AG04450 (cell line): ENCODE measurements at regions of chr4 and their contacts with region 1.

Region 1: DNA sequence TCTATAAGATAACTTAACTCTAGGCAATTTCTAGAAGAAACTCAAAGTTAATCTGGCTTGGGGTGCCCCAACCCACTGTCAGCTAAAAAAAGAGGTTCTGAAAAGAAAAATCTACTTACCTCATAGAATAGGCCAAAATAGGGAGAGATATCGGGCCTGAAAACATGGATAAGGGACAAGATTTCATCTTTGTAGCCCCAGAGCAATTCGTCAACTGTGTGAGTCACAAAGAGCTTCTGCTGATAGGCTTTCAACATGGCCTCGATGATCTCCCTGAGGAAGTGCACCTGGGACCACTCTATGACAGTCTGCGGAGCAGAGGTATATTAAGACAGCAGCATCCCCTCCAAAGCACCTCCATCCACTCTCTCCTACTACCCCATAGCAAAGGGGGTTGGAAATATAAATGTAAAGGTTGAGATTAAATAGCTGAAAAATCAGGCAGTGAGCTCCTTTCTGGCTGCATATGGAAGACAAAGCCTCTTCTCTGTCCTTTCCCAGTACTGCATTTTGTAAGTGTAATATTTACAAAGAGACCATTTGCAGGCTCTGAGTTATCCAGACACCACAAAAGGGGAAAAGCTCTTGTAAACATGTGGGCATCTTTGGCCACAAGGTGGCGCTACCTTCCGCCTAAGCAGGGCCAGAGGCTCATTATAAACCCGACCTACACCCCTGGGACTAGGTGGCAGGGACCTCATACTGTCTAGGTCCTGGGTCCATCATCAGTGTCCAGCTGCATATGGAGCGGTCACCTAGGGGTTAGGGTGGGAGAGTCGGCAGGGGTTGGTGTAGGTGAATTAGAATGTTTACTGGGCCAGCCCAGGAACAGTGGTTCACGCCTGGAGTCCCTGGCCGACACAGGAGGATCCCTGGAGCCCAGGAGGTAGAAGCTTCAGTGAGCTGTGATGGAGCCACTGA is 31.5 kb upstream of the NUP54 start:
- DNase-seq: peak; percentile 66
- H3K4me3 ChIP-seq: no peak overlapping the region
- H3K27ac ChIP-seq: no peak overlapping the region
- H3K27me3 ChIP-seq: no peaks in the 10 kb centered on the region
- CTCF ChIP-seq: peak; percentile 96

Region 2: DNA sequence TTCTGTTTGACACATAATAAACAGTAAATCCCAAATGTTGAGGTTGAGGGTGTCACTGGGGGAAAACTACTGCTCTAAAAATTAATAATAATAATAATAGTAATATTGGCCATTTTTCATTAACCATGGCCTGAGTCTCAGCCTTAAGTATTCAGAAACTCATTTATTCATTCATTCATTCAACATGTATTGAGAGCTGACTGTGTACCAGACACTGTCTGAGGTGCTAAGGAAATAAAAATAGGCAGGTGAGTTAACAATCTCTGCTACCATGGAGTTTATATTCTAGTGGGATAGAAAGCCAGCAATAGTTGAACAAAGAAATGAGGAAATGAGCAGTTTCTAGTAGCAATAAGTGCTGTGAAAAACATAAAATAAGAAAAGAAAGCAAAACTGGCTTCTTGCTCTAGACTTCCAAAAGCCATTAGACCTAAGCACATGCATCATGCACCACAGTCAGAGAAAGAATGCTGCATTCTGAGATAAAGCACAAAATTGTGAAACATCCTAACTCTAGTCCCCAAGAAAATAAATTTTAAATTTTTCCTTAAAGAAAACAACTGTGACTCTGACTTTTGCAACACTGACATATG is 944.2 kb before region 1 on chr4:
- CTCF ChIA-PET with region 1: no interaction called
- POLR2A ChIA-PET with region 1: no interaction called
- DNase-seq: no peak
- H3K4me3 ChIP-seq: no peak overlapping the region
- H3K27ac ChIP-seq: no peak overlapping the region
- H3K27me3 ChIP-seq: no peaks in the 10 kb centered on the region
- CTCF ChIP-seq: no peak

Region 3: GRCh38 chr4:75985116-75985515 is 194.5 kb before region 1 on chr4:
- CTCF ChIA-PET with region 1: no interaction called
- POLR2A ChIA-PET with region 1: no interaction called
- DNase-seq: peak; percentile 72
- H3K4me3 ChIP-seq: no peak overlapping the region
- H3K27ac ChIP-seq: peak overlapping the region; percentile 41
- H3K27me3 ChIP-seq: no peaks in the 10 kb centered on the region
- CTCF ChIP-seq: no peak

Region 4: GRCh38 chr4:76156635-76157034 is 23.0 kb before region 1 on chr4:
- CTCF ChIA-PET with region 1: interaction called, 26 read pairs
- POLR2A ChIA-PET with region 1: no interaction called
- DNase-seq: no peak
- H3K4me3 ChIP-seq: no peak overlapping the region
- H3K27ac ChIP-seq: no peak overlapping the region
- H3K27me3 ChIP-seq: no peaks in the 10 kb centered on the region
- CTCF ChIP-seq: no peak

Region 5: DNA sequence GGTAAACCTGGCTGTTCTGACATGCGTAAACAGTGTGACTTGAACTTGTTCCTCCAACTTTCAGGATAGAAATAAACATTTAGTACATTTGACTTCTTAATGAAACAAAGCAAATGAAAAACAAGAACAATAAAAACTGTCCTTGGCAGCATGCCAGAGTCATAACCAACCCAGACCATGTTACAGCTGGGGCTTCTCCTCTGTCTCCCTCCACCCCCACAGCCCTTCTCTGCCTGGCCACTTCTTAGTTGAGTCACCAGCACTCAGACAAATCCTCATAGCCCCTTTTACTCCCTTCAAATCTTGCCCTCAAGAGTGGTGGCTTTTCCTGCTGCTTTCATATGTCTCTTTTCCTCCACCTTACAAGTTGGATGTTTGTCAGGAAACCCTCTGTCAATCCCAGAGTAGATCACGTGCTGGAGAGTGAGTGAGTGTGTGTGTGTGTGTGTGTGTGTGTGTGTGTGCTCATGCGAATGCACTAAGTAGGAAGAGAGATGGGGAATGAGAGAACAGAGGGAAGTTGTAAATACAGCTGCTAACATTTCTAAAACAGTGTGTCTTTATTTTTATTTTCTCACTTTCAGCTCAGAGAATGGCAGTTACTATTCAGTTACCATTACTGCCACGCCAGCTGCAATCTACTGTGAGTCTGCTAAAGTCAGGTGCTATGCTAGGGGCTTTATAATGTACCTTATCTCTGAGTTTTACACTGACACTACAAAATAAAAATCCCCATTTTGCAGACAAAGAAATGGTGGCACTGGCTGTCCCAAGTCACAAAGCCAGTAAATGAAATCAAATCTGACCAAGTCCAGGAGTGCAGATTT is 19.0 kb after region 1 on chr4:
- CTCF ChIA-PET with region 1: interaction called, 25 read pairs
- POLR2A ChIA-PET with region 1: no interaction called
- DNase-seq: peak; percentile 72
- H3K4me3 ChIP-seq: peak overlapping the region; percentile 21; the same call in 1 of the 2 replicates
- H3K27ac ChIP-seq: peak overlapping the region; percentile 87
- H3K27me3 ChIP-seq: no peaks in the 10 kb centered on the region
- CTCF ChIP-seq: no peak

Region 6: DNA sequence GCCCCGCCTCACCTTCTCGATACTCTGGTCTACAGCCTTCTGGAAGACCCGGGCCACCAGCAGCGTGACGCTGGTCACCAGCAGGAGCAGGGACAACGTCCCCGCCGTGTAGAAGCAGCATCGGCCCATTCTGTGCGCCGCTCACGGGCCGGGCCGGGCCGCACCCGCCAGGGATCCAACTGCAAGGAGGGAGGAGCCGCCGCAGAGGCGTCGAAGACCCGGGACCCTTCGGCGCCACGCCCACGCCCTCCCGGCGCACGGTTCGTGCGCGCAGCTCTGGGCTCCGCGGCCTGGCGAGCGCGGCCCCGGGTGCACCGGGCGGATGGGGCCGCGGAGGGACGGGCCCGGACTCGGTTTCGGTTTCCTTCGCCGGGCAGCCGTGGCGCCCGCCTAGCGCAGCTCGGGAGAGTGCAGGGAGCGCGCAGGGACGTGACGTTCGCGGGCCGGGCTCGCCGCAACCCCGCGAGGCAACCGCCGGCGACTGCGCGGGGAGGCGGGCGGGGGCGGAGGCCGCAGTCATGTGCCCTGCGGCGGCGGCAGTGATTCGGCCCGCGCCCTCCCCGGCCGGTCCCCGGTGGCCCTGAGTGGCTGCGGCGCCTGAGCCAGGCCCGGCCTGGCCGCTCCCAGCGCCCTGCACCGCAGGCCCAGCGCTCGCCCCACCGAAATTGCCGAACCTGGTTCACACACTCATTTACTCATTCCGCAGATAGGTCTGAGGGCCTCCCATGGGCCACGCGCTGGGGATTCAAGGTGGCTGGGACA is 33.9 kb after region 1 on chr4 and contains the start of gene SCARB2:
- CTCF ChIA-PET with region 1: interaction called, 55 read pairs
- POLR2A ChIA-PET with region 1: no interaction called
- DNase-seq: peak; percentile 38
- H3K4me3 ChIP-seq: peak within 1 kb of the TSS; percentile 88
- H3K27ac ChIP-seq: peak within 1 kb of the TSS; percentile 93
- H3K27me3 ChIP-seq: no peaks in the 10 kb centered on the region
- CTCF ChIP-seq: no peak
- polyA plus RNA-seq, gene SCARB2: 152 and 161 TPM in 2 replicates

Region 7: DNA sequence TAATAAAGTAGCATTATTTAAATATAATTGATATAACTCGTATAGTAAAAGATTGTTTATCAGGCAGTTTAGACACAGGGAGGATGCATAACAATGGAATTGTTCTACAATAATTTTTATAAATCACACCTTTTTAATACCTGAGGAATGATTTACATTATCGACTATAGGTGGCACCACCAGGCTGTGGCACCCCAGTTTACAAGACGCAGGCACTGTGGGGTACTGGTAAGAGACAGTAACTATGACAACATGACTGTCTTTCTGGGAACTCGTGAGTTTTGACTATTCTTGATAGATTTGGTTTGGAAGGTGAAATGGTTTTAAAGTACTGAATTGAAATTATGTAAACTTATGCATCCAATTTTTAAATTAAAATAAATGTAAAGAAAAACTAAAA is 99.8 kb after region 1 on chr4:
- CTCF ChIA-PET with region 1: interaction called, 15 read pairs
- POLR2A ChIA-PET with region 1: no interaction called
- DNase-seq: no peak
- H3K4me3 ChIP-seq: no peak overlapping the region
- H3K27ac ChIP-seq: no peak overlapping the region
- H3K27me3 ChIP-seq: peaks cover 6% of the 10 kb centered on the region
- CTCF ChIP-seq: no peak

Region 8: DNA sequence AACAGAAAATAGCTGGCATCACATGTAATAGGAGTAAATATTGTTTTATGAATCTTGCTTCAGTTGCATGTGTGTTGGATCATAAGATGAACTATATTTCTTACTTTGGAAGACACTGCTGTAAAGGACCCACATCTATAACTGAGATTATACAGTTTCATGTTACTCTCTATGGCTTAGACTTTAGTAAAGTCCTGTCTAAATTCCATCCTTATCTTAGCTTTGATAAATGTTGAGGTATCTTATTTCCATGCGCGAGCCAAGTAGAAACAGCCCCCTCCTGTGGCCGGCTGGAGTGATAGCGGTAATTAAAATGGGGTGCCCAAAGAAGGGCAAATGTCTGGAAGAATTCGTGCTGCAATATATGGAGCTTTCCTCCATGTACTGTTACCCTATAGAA is 198.3 kb after region 1 on chr4:
- CTCF ChIA-PET with region 1: interaction called, 205 read pairs
- POLR2A ChIA-PET with region 1: no interaction called
- DNase-seq: no peak
- H3K4me3 ChIP-seq: no peak overlapping the region
- H3K27ac ChIP-seq: no peak overlapping the region
- H3K27me3 ChIP-seq: peaks cover 3% of the 10 kb centered on the region
- CTCF ChIP-seq: peak; percentile 58

Region 9: GRCh38 chr4:76504613-76505465 is 325.2 kb after region 1 on chr4:
- CTCF ChIA-PET with region 1: interaction called, 40 read pairs
- POLR2A ChIA-PET with region 1: no interaction called
- DNase-seq: peak; percentile 11
- H3K4me3 ChIP-seq: no peak overlapping the region
- H3K27ac ChIP-seq: no peak overlapping the region
- H3K27me3 ChIP-seq: peaks cover 14% of the 10 kb centered on the region
- CTCF ChIP-seq: peak; percentile 73